ENCODE measurements at regions of chr5 and their contacts with region 1.

Region 1: DNA sequence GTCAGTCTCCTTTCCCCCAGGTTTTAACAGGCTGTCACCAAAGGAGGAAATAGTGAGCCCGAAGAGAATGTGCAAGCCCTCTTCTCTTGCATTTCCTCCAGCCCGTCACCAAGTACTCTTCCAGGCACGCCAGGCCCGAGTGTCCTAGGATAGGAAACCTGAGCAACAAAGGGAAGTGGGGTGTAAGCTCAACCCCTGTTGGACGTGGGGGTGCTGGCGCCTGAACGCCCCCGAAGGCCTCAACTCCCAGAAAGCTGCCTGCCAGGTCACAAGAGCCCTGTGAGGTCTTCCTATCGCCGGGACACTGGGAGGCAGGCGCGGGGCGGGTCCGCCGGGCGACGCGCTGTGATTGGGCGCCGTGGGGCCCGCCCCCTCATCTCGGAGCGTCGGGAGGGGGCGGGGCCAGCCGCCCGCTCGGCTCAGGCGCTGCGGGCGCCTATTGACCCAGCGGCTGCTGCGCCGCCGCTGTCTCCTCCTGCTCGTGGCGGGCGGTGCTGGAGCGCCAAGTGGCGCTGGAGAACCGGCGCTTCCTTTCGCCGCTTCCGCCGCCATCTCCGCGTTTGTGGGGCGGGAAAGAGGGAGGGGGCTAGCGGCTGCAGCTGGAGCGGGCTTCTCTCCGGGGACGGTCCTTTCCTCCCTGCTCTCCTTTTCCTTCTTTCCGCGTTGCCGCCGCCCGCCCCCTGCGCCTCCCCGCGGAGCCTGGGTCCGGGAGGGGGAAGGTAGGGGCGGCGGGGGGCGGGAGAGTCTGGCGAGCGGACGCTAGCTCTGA is 572 bp upstream of the MAN2A1 start:
- DNase-seq: peak; percentile 92
- H3K4me3 Mint-ChIP-seq: peak overlapping the region; percentile 96
- H3K27ac Mint-ChIP-seq: peak overlapping the region; percentile 97
- H3K4me1 Mint-ChIP-seq: peaks cover 35% of the 10 kb centered on the region
- H3K27me3 Mint-ChIP-seq: no peaks in the 10 kb centered on the region
- CTCF ChIP-seq: peak; percentile 12

Region 2: DNA sequence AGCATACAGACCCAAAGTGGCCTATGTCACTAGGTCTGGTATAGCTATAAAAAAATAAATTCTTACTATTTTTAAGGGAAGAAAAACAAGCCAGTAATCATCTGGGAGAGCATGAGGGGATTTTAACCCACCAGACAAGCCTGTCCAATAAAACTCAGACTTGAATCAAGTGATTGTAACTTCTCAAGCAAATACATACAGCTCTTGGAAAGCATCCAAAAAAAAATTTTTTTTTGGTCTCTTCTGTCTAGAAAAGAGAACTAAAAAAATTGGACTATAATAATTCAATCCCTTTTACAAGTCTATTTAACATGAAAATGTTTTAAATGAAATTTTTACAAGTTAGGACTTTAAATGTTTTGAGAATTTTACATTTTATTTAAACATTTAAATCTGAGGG is 1368.9 kb before region 1 on chr5:
- CTCF ChIA-PET with region 1: no interaction called
- intact Hi-C with region 1: no loop called
- DNase-seq: no peak
- H3K4me3 Mint-ChIP-seq: no peak overlapping the region
- H3K27ac Mint-ChIP-seq: no peak overlapping the region
- H3K4me1 Mint-ChIP-seq: no peaks in the 10 kb centered on the region
- H3K27me3 Mint-ChIP-seq: no peaks in the 10 kb centered on the region
- CTCF ChIP-seq: no peak

Region 3: GRCh38 chr5:108521841-108522506 is 1167.2 kb before region 1 on chr5:
- CTCF ChIA-PET with region 1: no interaction called
- intact Hi-C with region 1: loop called (anchors 1 kb)
- DNase-seq: peak; percentile 68
- H3K4me3 Mint-ChIP-seq: no peak overlapping the region
- H3K27ac Mint-ChIP-seq: no peak overlapping the region
- H3K4me1 Mint-ChIP-seq: no peaks in the 10 kb centered on the region
- H3K27me3 Mint-ChIP-seq: peaks cover 43% of the 10 kb centered on the region
- CTCF ChIP-seq: peak; percentile 68

Region 4: GRCh38 chr5:108681079-108681921 is 1007.9 kb before region 1 on chr5:
- CTCF ChIA-PET with region 1: no interaction called
- intact Hi-C with region 1: loop called (anchors 5 kb)
- DNase-seq: peak; percentile 57
- H3K4me3 Mint-ChIP-seq: no peak overlapping the region
- H3K27ac Mint-ChIP-seq: no peak overlapping the region
- H3K4me1 Mint-ChIP-seq: peaks cover 21% of the 10 kb centered on the region
- H3K27me3 Mint-ChIP-seq: no peaks in the 10 kb centered on the region
- CTCF ChIP-seq: peak; percentile 66

Region 5: DNA sequence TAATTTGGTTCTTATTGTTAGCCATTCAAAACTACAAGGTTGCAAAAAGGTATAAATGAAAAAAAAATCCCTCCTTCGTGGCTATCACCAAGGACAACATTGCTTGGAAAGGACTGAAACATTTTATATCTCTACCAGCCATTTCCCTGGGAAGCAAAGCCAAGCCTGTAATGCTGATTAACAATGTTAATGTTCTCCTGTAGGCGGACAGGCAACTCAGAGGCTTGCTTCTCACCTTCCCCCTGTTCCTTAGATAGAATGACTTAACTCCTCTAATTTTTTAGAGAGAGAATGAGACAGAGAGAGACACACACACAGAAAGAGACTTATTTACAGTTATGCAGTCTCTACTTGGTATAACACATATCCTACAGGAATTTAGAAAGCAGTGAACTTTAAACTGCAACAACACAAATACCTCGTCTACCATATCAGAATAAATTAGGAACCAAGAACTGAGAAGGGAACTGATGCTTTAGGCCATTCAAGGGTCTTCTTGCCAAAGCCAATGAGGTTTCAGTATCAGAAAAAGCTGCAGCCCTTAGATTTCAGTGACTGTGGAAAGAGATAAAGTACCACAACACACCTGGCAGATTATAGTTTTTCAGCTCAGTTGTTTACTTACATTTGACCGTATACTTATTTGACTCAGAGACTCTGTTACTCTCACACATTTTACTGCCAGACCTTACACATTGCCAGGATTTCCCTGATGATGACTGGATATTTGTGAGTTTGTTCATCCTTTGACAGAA is 20.3 kb before region 1 on chr5:
- CTCF ChIA-PET with region 1: no interaction called
- intact Hi-C with region 1: no loop called
- DNase-seq: no peak
- H3K4me3 Mint-ChIP-seq: no peak overlapping the region
- H3K27ac Mint-ChIP-seq: no peak overlapping the region
- H3K4me1 Mint-ChIP-seq: no peaks in the 10 kb centered on the region
- H3K27me3 Mint-ChIP-seq: peaks cover 33% of the 10 kb centered on the region
- CTCF ChIP-seq: no peak

Region 6: GRCh38 chr5:109844148-109844547 is 155.0 kb after region 1 on chr5:
- CTCF ChIA-PET with region 1: interaction called, 5 read pairs
- intact Hi-C with region 1: loop called (anchors 1 kb)
- DNase-seq: peak; percentile 20
- H3K4me3 Mint-ChIP-seq: no peak overlapping the region
- H3K27ac Mint-ChIP-seq: no peak overlapping the region
- H3K4me1 Mint-ChIP-seq: no peaks in the 10 kb centered on the region
- H3K27me3 Mint-ChIP-seq: no peaks in the 10 kb centered on the region
- CTCF ChIP-seq: no peak

Region 7: GRCh38 chr5:110321117-110321516 is 632.0 kb after region 1 on chr5:
- CTCF ChIA-PET with region 1: no interaction called
- intact Hi-C with region 1: no loop called
- DNase-seq: no peak
- H3K4me3 Mint-ChIP-seq: no peak overlapping the region
- H3K27ac Mint-ChIP-seq: no peak overlapping the region
- H3K4me1 Mint-ChIP-seq: no peaks in the 10 kb centered on the region
- H3K27me3 Mint-ChIP-seq: no peaks in the 10 kb centered on the region
- CTCF ChIP-seq: no peak

Region 8: GRCh38 chr5:110625376-110625999 is 936.3 kb after region 1 on chr5:
- CTCF ChIA-PET with region 1: interaction called, 3 read pairs
- intact Hi-C with region 1: loop called (anchors 10 kb)
- DNase-seq: no peak
- H3K4me3 Mint-ChIP-seq: no peak overlapping the region
- H3K27ac Mint-ChIP-seq: no peak overlapping the region
- H3K4me1 Mint-ChIP-seq: no peaks in the 10 kb centered on the region
- H3K27me3 Mint-ChIP-seq: no peaks in the 10 kb centered on the region
- CTCF ChIP-seq: no peak

Measured in Calu3 (cell line).